ENCODE measurements at regions of chr12 and their contacts with region 1.

Region 1: GRCh38 chr12:6461401-6462233 is 8.9 kb downstream of the VAMP1 start:
- DNase-seq: no peak
- H3K4me3 ChIP-seq: no peak overlapping the region
- H3K27ac ChIP-seq: no peak overlapping the region
- H3K4me1 ChIP-seq: no peaks in the 10 kb centered on the region
- H3K27me3 ChIP-seq: no peaks in the 10 kb centered on the region
- CTCF ChIP-seq: no peak
- EP300 ChIP-seq: no peak
- POLR2A ChIP-seq: no peak
- RAD21 ChIP-seq: no peak

Region 2: GRCh38 chr12:5969977-5970690 is 491.5 kb before region 1 on chr12:
- CTCF ChIA-PET with region 1: no interaction called
- POLR2A ChIA-PET with region 1: no interaction called
- DNase-seq: no peak
- H3K4me3 ChIP-seq: no peak overlapping the region
- H3K27ac ChIP-seq: no peak overlapping the region
- H3K4me1 ChIP-seq: peaks cover 3 to 6% (median 5%) of the 10 kb centered on the region in 4 experiments; a peak in 4 of 7 replicates
- H3K27me3 ChIP-seq: 0 out of 7 replicates have a peak, but pooled peaks cover 0 to 3% (median 0%) of the 10 kb centered on the region in 4 experiments
- CTCF ChIP-seq: peak in 2 of 3 experiments; percentile 6 to 38; a peak in 2 of 4 replicates
- EP300 ChIP-seq: no peak
- POLR2A ChIP-seq: no peak
- RAD21 ChIP-seq: no peak

Region 3: GRCh38 chr12:6434205-6435140 is 27.1 kb before region 1 on chr12:
- CTCF ChIA-PET with region 1: interaction called, 33 read pairs
- POLR2A ChIA-PET with region 1: interaction called, 17 read pairs
- DNase-seq: no peak
- H3K4me3 ChIP-seq: no peak overlapping the region
- H3K27ac ChIP-seq: no peak overlapping the region
- H3K4me1 ChIP-seq: peaks cover 0 to 8% (median under 1%) of the 10 kb centered on the region in 4 experiments; a peak in 3 of 7 replicates
- H3K27me3 ChIP-seq: no peaks in the 10 kb centered on the region
- CTCF ChIP-seq: peak in 1 of 3 experiments; percentile 2; a peak in 1 of 4 replicates
- EP300 ChIP-seq: no peak
- POLR2A ChIP-seq: no peak
- RAD21 ChIP-seq: no peak

Region 4: GRCh38 chr12:6443361-6443983 is 18.1 kb before region 1 on chr12:
- CTCF ChIA-PET with region 1: interaction called, 42 read pairs
- POLR2A ChIA-PET with region 1: interaction called, 10 read pairs
- DNase-seq: no peak
- H3K4me3 ChIP-seq: no peak overlapping the region
- H3K27ac ChIP-seq: no peak overlapping the region
- H3K4me1 ChIP-seq: no peaks in the 10 kb centered on the region
- H3K27me3 ChIP-seq: no peaks in the 10 kb centered on the region
- CTCF ChIP-seq: no peak
- EP300 ChIP-seq: no peak
- POLR2A ChIP-seq: no peak
- RAD21 ChIP-seq: no peak